ENCODE measurements at regions of chr2 and their contacts with region 1.

Region 1: DNA sequence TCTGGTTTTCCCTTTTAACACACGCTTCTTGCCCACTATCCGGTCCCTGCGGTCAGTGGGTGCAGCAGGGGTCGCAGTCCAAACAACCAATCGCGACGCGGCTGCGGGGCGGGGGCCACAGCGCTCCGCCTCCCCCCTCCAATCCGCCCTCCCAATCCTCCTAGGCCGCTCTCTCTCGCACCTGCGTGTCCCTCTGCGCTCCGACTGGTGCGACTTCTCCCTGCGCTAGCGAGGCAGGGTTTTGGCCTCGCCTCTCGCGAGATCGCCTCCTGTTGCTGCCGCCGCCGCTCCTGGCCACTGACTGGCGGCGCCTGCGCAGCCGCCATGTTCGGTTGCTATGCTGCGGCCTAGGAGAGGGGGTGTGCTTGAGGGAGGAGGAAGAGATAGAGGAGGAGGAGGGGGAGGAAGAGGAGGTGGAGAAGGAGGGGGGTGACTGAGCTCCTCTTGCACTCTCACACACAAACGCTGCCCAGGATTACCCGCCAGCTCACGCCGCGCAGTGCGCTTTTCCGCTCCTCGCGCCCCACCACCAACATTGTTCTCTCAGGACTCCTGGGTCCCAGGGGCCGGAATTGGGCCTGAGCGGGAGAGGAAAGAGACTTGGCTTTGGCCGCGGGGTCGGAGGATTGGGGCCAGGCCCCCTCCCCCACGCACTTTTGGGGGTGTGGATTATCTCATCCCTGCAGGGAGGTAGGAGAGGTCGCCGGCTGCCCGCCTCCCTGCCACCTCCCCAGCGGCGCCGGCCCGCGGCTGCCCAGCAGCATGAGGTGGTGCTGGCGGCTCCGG is at the start of gene PTPN4:
- DNase-seq: peak; percentile 87 to 99
- ATAC-seq: peak; percentile 90 to 98 (median 90)
- H3K4me3 ChIP-seq: peak within 1 kb of the TSS; percentile 95
- H3K4me3 Mint-ChIP-seq: peak within 1 kb of the TSS; percentile 84
- H3K27ac ChIP-seq: peak within 1 kb of the TSS; percentile 92
- H3K27ac Mint-ChIP-seq: peak within 1 kb of the TSS; percentile 35 to 99
- H3K4me1 ChIP-seq: peaks cover 11% of the 10 kb centered on the region
- H3K4me1 Mint-ChIP-seq: peaks cover 47 to 49% of the 10 kb centered on the region in 2 donors
- H3K27me3 ChIP-seq: no peaks in the 10 kb centered on the region
- H3K27me3 Mint-ChIP-seq: no peaks in the 10 kb centered on the region
- CTCF ChIP-seq: no peak
- total RNA-seq, gene PTPN4: 265 to 347 (median 283) TPM

Region 2: DNA sequence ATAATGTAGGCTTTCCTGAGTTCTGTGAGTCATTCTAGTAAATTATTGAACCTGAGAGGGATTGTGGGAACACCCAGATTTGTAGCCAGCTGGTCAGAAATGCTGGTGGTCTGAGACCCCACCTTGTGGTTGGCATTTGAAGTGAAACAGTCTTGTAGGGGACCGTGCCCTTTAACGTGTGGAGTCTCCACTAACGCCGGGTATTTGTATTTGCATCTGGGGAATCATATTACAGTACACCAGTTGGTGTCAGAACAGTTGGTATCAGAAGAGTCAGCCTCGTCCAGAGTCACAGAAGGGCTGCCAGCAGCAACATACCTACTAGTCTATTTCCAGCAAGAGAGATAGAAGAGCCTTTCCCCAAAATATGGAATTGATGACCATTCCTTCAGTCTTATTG is 38.2 kb before region 1 on chr2:
- intact Hi-C with region 1: no loop called
- DNase-seq: no peak
- ATAC-seq: no peak
- H3K4me3 ChIP-seq: no peak overlapping the region
- H3K4me3 Mint-ChIP-seq: no peak overlapping the region
- H3K27ac ChIP-seq: no peak overlapping the region
- H3K27ac Mint-ChIP-seq: no peak overlapping the region
- H3K4me1 ChIP-seq: no peaks in the 10 kb centered on the region
- H3K4me1 Mint-ChIP-seq: peaks cover 6% of the 10 kb centered on the region in 2 donors
- H3K27me3 ChIP-seq: no peaks in the 10 kb centered on the region
- H3K27me3 Mint-ChIP-seq: no peaks in the 10 kb centered on the region
- CTCF ChIP-seq: no peak

Region 3: GRCh38 chr2:119929537-119929936 is 169.9 kb after region 1 on chr2:
- intact Hi-C with region 1: loop called (anchors 2 kb)
- DNase-seq: peak in 1 of 2 donors; percentile 73
- ATAC-seq: peak; percentile 74 to 86 (median 86)
- H3K4me3 ChIP-seq: peak overlapping the region; percentile 72
- H3K4me3 Mint-ChIP-seq: peak overlapping the region; percentile 86
- H3K27ac ChIP-seq: peak overlapping the region; percentile 76
- H3K27ac Mint-ChIP-seq: peak overlapping the region; percentile 83 to 97
- H3K4me1 ChIP-seq: peaks cover 9% of the 10 kb centered on the region
- H3K4me1 Mint-ChIP-seq: peaks cover 47 to 56% of the 10 kb centered on the region in 2 donors
- H3K27me3 ChIP-seq: no peaks in the 10 kb centered on the region
- H3K27me3 Mint-ChIP-seq: no peaks in the 10 kb centered on the region
- CTCF ChIP-seq: no peak

Region 4: DNA sequence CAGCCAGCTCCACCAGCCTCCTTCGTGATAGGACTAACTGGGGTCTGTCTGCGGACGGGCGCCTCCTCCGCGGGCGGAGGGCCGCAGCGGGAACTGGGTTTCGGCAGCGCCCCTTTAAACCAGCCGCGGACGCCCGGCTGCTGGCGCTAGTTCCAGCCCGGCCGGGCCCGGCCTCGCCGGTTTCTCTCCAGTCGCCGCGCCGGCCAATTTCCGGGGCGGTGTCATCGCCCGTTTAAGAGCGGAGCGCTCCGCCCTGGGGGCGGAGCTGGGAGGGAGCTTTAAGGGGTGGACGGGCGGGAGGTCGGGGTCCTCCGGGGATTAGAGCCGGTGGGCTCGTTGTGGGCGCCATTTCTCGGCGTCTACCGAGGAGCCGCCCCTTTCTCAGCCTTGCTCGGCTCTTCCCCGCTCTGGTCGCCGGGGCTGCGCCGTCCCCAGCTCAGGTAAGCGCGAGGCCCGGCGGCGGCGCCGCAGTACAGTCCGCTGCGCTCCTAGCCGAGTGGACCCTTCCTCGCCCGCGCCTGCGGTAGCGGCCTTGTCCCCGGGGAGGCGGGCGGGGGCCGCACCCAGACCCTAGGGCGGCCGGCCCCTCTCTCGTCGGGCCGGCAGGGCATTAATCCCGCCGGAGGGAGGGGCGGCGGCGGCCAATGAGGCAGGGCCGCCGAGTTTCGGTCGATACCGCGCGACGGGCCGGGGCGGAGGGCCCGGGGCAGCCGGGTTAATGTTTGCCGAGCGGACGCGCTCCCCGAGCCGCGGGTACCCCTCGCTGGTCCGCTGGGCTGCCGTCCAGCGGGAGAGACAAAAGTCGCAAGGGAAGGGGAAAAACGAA is 253.3 kb after region 1 on chr2 and contains the start of gene EPB41L5:
- intact Hi-C with region 1: loop called (anchors 2 kb)
- DNase-seq: peak; percentile 71 to 85
- ATAC-seq: peak; percentile 94 to 96 (median 95)
- H3K4me3 ChIP-seq: peak within 1 kb of the TSS; percentile 73
- H3K4me3 Mint-ChIP-seq: peak within 1 kb of the TSS; percentile 82
- H3K27ac ChIP-seq: peak within 1 kb of the TSS; percentile 63
- H3K27ac Mint-ChIP-seq: peak within 1 kb of the TSS; percentile 60 to 86
- H3K4me1 ChIP-seq: peaks cover 6% of the 10 kb centered on the region
- H3K4me1 Mint-ChIP-seq: peaks cover 10 to 17% of the 10 kb centered on the region in 2 donors
- H3K27me3 ChIP-seq: no peaks in the 10 kb centered on the region
- H3K27me3 Mint-ChIP-seq: peaks cover 0 to 3% of the 10 kb centered on the region in 2 donors
- CTCF ChIP-seq: no peak
- total RNA-seq, gene EPB41L5: 3.0 to 8.5 (median 3.6) TPM

Measured in natural killer cell (primary cell).